ENCODE measurements at regions of chr19 and their contacts with region 1.

Region 1: GRCh38 chr19:40190891-40191835 is at the start of gene MAP3K10:
- DNase-seq: peak; percentile 83
- ATAC-seq: peak; percentile 87
- H3K4me3 ChIP-seq: peak within 1 kb of the TSS; percentile 63 to 100 (median 99)
- H3K4me3 Mint-ChIP-seq: peak within 1 kb of the TSS; percentile 94
- H3K27ac ChIP-seq: peak within 1 kb of the TSS; percentile 83 to 85
- H3K27ac Mint-ChIP-seq: peak within 1 kb of the TSS; percentile 95
- H3K4me1 ChIP-seq: peaks cover 10 to 25% of the 10 kb centered on the region in 2 donors
- H3K4me1 Mint-ChIP-seq: peaks cover 31% of the 10 kb centered on the region
- H3K27me3 ChIP-seq: no peaks in the 10 kb centered on the region
- H3K27me3 Mint-ChIP-seq: no peaks in the 10 kb centered on the region
- CTCF ChIP-seq: no peak
- total RNA-seq, gene MAP3K10: 35.9 and 41.6 TPM in 2 replicates

Region 2: DNA sequence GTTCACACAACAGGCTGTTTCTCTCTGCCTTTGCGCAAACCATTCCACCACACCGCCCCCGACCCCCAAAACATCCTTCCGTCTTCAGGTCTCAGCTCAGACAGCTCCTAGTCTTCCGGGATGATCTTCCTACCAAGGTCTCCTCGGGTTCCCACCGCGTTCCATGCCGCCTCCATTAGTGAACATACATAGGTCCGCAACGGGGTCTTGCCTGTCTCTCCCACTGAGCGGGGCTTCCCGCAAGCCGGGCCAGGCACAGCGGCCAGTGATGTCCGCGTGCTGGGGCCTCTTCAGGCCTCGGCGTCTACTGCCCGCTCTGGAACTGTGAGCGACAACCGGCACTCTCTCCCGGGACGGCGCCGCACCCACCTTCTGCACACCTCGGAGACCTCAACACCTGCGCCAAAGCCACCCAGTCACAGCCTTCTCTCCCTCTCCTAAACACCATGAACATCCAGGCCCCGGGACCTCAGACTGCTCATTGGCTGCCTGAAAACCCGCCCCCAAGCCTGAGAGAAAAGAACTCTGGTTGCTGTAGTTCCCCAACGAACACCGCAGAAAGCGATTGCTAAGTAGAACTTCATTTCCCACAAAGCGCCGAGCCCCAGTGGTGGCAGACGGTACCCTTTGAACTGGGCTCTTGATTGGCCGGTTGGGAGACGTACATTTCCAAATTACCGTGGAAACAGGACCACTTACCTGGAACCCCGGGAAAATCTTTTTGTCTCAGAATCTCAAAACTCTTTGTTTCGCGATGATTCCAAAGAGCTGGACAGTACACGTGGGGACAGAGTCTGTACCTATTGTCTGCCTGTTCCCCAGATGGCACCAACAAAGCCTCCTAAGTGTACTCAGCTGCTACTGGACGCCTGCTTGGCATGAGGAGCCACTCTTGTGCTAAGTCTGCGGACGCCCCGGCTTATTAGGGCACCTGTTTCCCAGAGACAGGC is 366.7 kb before region 1 on chr19:
- CTCF ChIA-PET with region 1: no interaction called
- POLR2A ChIA-PET with region 1: no interaction called
- intact Hi-C with region 1: loop called (anchors 1 kb)
- DNase-seq: peak; percentile 92
- ATAC-seq: peak; percentile 98
- H3K4me3 ChIP-seq: peak overlapping the region; percentile 66 to 85 (median 79)
- H3K4me3 Mint-ChIP-seq: no peak overlapping the region
- H3K27ac ChIP-seq: peak overlapping the region; percentile 38 to 55
- H3K27ac Mint-ChIP-seq: no peak overlapping the region
- H3K4me1 ChIP-seq: peaks cover 18 to 30% of the 10 kb centered on the region in 2 donors
- H3K4me1 Mint-ChIP-seq: peaks cover 13% of the 10 kb centered on the region
- H3K27me3 ChIP-seq: no peaks in the 10 kb centered on the region
- H3K27me3 Mint-ChIP-seq: no peaks in the 10 kb centered on the region
- CTCF ChIP-seq: no peak

Region 3: DNA sequence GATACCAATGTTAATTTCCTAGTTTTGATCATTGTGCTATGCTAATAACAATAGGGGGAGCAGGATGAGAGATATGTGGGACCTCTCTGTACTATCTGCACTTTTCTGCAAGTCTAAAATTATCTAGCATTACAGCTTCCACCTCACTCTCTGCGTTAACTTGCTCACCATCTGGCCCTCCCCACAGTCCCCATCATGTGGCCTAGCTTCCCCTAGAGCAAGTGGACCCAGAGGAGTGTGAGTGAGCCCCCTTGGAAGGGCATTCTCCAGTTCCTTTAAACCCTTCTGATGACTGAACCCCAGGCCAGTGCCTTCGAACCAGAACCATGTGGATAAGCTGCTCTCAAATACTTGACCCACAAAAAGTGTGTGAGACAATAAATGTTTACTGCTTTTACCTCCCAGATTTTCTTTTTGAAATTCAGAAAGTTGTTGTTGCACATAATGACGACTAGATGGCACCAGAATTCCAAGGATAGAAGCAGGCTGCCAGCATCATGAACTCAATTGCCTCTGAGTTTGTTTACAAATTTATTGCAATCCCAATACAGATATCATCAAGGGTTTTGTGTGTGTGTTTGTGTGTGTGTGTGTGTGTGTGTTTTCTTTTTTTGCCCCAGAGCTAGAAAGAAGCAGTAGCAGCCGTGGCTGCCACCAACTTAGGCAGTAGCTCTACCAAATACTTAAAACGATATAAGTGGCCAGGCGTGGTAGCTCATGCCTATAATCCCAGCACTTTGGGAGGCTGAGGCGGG is 51.5 kb before region 1 on chr19:
- CTCF ChIA-PET with region 1: interaction called, 10 read pairs
- POLR2A ChIA-PET with region 1: no interaction called
- intact Hi-C with region 1: loop called (anchors 1 kb)
- DNase-seq: peak; percentile 73
- ATAC-seq: no peak
- H3K4me3 ChIP-seq: no peak overlapping the region
- H3K4me3 Mint-ChIP-seq: no peak overlapping the region
- H3K27ac ChIP-seq: no peak overlapping the region
- H3K27ac Mint-ChIP-seq: peak overlapping the region; percentile 46
- H3K4me1 ChIP-seq: peaks cover 23 to 26% of the 10 kb centered on the region in 2 donors
- H3K4me1 Mint-ChIP-seq: peaks cover 30% of the 10 kb centered on the region
- H3K27me3 ChIP-seq: no peaks in the 10 kb centered on the region
- H3K27me3 Mint-ChIP-seq: peaks cover 10% of the 10 kb centered on the region
- CTCF ChIP-seq: peak; percentile 81

Region 4: DNA sequence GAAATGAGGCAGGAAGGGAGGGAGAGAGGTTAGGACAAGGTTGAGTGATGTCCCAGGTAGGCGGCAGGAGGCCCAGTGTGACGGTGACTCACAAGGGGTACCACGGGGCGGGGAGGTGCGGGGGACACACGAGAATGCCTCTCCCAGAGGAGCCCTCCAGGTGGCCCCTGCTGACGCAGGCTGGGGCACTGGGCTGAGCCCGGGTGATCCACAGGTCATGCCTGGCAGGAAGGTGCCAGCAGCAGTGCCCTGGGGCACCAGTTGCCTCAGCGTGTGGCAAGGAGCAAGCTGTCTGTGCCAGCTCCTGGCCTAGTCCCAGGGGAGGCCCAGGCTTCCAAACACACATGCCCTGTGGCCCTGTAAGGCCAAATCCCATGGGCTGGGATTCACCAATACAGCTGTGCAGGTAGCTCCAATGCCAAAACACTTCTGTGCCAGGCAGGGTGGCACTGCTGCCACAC is 65.9 kb after region 1 on chr19:
- CTCF ChIA-PET with region 1: no interaction called
- POLR2A ChIA-PET with region 1: no interaction called
- intact Hi-C with region 1: no loop called
- DNase-seq: no peak
- ATAC-seq: peak; percentile 73
- H3K4me3 ChIP-seq: no peak overlapping the region
- H3K4me3 Mint-ChIP-seq: no peak overlapping the region
- H3K27ac ChIP-seq: no peak overlapping the region
- H3K27ac Mint-ChIP-seq: no peak overlapping the region
- H3K4me1 ChIP-seq: peaks cover 0 to 2% of the 10 kb centered on the region in 2 donors
- H3K4me1 Mint-ChIP-seq: peaks cover 37% of the 10 kb centered on the region
- H3K27me3 ChIP-seq: no peaks in the 10 kb centered on the region
- H3K27me3 Mint-ChIP-seq: no peaks in the 10 kb centered on the region
- CTCF ChIP-seq: no peak

Region 5: DNA sequence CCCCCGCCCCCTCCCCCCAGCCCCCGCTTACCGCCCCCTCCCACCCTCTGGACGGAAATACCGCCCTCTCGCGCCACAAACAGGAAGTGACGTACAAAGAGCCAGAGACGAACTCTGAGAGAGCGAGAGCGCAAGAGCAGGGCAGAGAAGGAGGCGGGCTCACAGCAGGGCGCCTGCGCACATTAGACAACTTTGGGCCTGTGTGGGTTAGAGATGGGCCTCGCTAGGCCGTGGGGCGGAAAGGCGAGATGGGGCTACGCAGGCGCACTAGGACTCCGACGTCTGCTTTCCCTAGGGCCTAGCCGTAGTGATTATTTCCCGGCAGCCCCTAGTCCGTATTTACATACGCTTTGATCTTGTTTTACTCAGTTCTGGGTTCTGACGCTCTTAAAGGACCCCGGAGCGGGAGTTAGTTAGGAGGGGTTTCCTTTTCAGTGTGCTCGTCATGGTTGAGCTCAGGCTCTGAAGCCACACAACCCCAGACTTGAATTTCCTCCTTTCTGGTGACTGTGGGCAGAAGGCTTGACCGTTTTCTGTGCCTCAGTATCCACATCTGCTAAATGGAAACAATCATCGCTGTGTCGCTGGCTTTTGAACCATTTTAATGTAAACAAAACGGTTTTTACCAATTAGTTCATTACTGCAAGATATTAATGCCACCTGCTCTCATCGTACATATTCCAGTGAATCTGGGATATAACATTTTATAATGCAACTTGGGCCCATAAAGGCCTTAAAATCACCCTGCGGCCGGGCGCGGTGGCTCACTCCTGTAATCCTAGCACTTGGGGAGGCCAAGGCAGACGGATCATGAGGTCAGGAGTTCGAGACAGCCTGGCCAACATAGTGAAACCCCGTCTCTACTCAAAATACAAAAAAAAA is 94.4 kb after region 1 on chr19:
- CTCF ChIA-PET with region 1: no interaction called
- POLR2A ChIA-PET with region 1: interaction called, 3 read pairs
- intact Hi-C with region 1: loop called (anchors 1 kb)
- DNase-seq: peak; percentile 100
- ATAC-seq: peak; percentile 74
- H3K4me3 ChIP-seq: peak overlapping the region in 4 of 5 experiments; percentile 68 to 89 (median 78)
- H3K4me3 Mint-ChIP-seq: peak overlapping the region; percentile 87
- H3K27ac ChIP-seq: peak overlapping the region; percentile 99 to 100
- H3K27ac Mint-ChIP-seq: peak overlapping the region; percentile 97
- H3K4me1 ChIP-seq: peaks cover 40 to 54% of the 10 kb centered on the region in 2 donors
- H3K4me1 Mint-ChIP-seq: peaks cover 53% of the 10 kb centered on the region
- H3K27me3 ChIP-seq: no peaks in the 10 kb centered on the region
- H3K27me3 Mint-ChIP-seq: no peaks in the 10 kb centered on the region
- CTCF ChIP-seq: no peak

Region 6: GRCh38 chr19:40529093-40529954 is 338.2 kb after region 1 on chr19:
- CTCF ChIA-PET with region 1: no interaction called
- POLR2A ChIA-PET with region 1: no interaction called
- intact Hi-C with region 1: loop called (anchors 2 kb)
- DNase-seq: peak; percentile 95
- ATAC-seq: peak; percentile 91
- H3K4me3 ChIP-seq: peak overlapping the region; percentile 9 to 69 (median 41)
- H3K4me3 Mint-ChIP-seq: peak overlapping the region; percentile 82
- H3K27ac ChIP-seq: no peak overlapping the region
- H3K27ac Mint-ChIP-seq: peak overlapping the region; percentile 64
- H3K4me1 ChIP-seq: peaks cover 13 to 14% of the 10 kb centered on the region in 2 donors
- H3K4me1 Mint-ChIP-seq: peaks cover 13% of the 10 kb centered on the region
- H3K27me3 ChIP-seq: peaks cover 0 to 35% (median 18%) of the 10 kb centered on the region in 4 experiments
- H3K27me3 Mint-ChIP-seq: peaks cover 44% of the 10 kb centered on the region
- CTCF ChIP-seq: peak; percentile 91